A549 (cell line): ENCODE measurements at regions of chr3 and their contacts with region 1.

Region 1: GRCh38 chr3:17639765-17640164 is 102.7 kb downstream of the TBC1D5 start:
- DNase-seq: peak; percentile 35 to 96
- ATAC-seq: peak; percentile 96 to 99
- H3K4me3 ChIP-seq: peak overlapping the region; percentile 34
- H3K27ac ChIP-seq: peak overlapping the region; percentile 92
- H3K4me1 ChIP-seq: peaks cover 66% of the 10 kb centered on the region
- CTCF ChIP-seq: no peak
- EP300 ChIP-seq: peak; percentile 80 to 84; a peak in 3 of 5 replicates
- POLR2A ChIP-seq: no peak
- RAD21 ChIP-seq: peak in 1 of 2 experiments; percentile 39; a peak in 1 of 5 replicates

Region 2: DNA sequence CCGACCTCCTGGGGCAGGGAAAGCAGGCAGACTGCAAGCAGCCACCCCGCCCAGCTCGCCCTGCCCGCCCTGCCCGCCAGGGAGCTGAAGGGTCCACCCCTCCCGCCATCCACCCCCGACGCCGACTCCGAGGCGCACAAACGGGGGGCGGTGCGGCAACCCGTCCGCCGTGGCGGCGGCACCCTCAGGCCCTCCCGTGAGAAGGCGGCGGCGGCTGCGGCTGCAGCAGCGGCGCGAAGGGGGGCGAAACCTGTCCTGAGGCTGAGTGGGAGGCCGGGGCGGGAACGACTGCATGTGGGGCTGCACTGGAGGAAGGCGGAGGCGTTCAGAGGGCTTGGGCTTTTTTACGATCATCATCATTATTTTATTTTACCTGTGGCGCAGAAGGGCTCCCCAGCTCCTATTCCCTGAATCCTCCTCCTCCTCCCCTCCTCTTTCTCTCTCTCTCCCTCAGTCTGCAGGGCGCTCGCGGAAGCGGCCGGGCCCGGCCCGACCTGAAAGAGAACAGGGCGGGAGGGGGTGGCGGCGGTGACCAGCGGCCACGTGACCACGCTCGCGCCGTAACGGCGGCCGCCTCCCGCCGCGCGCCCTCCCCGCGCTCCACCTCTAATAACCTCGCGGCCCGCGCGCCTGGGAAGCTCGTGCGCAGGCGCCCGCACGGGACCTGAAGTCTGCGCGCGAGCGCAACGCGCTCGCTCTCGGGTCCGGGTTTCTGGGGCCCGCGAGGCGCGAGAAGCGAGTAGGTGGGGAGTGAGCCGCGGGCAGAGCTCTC is 102.5 kb after region 1 on chr3 and contains the start of gene TBC1D5:
- CTCF ChIA-PET with region 1: interaction called, 6 read pairs
- POLR2A ChIA-PET with region 1: interaction called, 11 read pairs
- DNase-seq: peak; percentile 75 to 98
- ATAC-seq: peak; percentile 84 to 92
- H3K4me3 ChIP-seq: peak within 1 kb of the TSS; percentile 64
- H3K27ac ChIP-seq: peak within 1 kb of the TSS; percentile 96 to 100
- H3K4me1 ChIP-seq: peaks cover 25% of the 10 kb centered on the region
- CTCF ChIP-seq: no peak
- EP300 ChIP-seq: no peak
- POLR2A ChIP-seq: peak; percentile 73; the same call in 1 of the 2 replicates
- RAD21 ChIP-seq: no peak; a peak in 1 of 5 replicates
- polyA plus RNA-seq, gene TBC1D5: 67.3 and 72.2 TPM in 2 replicates